MCF 10A (cell line): ENCODE measurements at regions of chr20 and their contacts with region 1.

Region 1: DNA sequence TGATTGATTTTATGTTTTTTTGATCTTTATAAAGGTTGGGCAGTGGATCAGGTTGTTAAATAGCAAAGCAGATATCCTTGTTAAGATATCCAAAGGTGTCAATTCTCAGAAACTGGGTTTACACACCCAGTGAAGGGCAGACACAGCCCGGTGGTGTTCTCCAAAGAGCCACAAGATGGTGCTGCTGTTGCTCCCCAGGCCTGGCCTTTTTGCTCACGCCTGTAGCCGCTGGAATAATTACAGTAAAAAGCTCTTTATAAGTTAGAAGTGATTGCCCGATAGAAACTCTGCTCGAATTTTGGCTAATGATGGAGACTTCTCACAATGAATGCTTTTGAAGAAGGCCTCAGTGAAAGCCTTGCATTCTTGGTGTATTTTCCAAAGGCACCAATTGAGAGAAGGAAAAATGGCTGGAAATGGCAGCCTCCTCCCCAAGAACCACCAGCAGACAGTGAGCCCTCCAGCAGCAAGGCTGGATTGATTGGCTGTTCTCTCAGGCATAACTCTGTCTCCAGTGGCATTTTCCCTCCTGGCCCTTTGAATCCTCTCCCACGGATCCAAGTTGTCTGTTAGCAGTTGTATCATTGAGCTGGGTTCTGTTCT is 120.5 kb upstream of the CHD6 start:
- DNase-seq: peak; percentile 56
- H3K4me3 Mint-ChIP-seq: no peak overlapping the region
- H3K27ac Mint-ChIP-seq: no peak overlapping the region
- H3K4me1 Mint-ChIP-seq: no peaks in the 10 kb centered on the region
- H3K27me3 Mint-ChIP-seq: peaks cover 4% of the 10 kb centered on the region
- CTCF ChIP-seq: peak; percentile 81

Region 2: GRCh38 chr20:41701588-41702348 is 36.9 kb before region 1 on chr20:
- CTCF ChIA-PET with region 1: interaction called, 38 read pairs
- POLR2A ChIA-PET with region 1: no interaction called
- intact Hi-C with region 1: no loop called
- DNase-seq: no peak
- H3K4me3 Mint-ChIP-seq: no peak overlapping the region
- H3K27ac Mint-ChIP-seq: no peak overlapping the region
- H3K4me1 Mint-ChIP-seq: peaks cover 6% of the 10 kb centered on the region
- H3K27me3 Mint-ChIP-seq: peaks cover 10% of the 10 kb centered on the region
- CTCF ChIP-seq: no peak

Region 3: DNA sequence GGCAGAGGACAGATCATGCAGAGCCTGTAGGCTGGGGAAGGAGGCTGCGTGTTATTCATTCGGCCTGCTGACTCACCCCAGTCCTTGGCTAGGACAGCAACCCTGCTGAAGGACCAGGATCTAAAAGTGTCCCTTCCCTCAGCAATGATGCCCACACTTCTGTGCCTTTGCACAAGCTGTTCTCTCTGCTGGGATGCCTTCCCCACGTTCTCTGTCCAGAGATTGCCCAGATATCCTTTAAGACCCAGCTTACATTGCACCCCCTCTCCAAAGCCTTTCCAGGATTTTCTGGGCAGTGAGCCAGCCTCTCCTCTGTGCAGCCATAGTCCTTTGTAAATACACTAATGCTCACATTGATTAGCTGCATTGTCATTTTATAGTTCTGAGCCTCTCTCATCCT is 21.2 kb before region 1 on chr20:
- CTCF ChIA-PET with region 1: interaction called, 111 read pairs
- POLR2A ChIA-PET with region 1: no interaction called
- intact Hi-C with region 1: no loop called
- DNase-seq: peak; percentile 30
- H3K4me3 Mint-ChIP-seq: no peak overlapping the region
- H3K27ac Mint-ChIP-seq: no peak overlapping the region
- H3K4me1 Mint-ChIP-seq: no peaks in the 10 kb centered on the region
- H3K27me3 Mint-ChIP-seq: peaks cover 13% of the 10 kb centered on the region
- CTCF ChIP-seq: no peak

Region 4: DNA sequence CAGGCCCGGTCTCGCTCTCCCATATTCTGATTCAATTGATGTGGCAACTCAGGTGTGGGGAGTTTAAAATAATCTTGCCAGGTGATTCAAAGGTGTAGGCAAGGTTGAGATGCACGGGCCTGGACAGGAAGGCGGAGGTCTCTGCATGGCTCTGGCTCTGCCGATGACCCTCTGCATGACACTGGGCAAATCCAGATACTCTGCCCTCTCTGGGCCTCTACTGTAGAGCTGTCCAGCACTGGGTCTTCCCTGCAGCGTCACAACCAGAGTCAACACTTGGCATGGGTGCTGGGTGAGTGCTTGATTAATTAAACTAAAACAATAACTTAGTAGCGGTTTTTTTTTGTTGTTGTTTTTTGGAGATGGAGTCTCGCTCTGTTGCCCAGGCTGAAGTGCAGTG is 15.2 kb before region 1 on chr20:
- CTCF ChIA-PET with region 1: interaction called, 111 read pairs
- POLR2A ChIA-PET with region 1: no interaction called
- intact Hi-C with region 1: no loop called
- DNase-seq: no peak
- H3K4me3 Mint-ChIP-seq: no peak overlapping the region
- H3K27ac Mint-ChIP-seq: no peak overlapping the region
- H3K4me1 Mint-ChIP-seq: no peaks in the 10 kb centered on the region
- H3K27me3 Mint-ChIP-seq: no peaks in the 10 kb centered on the region
- CTCF ChIP-seq: no peak